ENCODE measurements at regions of chrX and their contacts with region 1.

Region 1: DNA sequence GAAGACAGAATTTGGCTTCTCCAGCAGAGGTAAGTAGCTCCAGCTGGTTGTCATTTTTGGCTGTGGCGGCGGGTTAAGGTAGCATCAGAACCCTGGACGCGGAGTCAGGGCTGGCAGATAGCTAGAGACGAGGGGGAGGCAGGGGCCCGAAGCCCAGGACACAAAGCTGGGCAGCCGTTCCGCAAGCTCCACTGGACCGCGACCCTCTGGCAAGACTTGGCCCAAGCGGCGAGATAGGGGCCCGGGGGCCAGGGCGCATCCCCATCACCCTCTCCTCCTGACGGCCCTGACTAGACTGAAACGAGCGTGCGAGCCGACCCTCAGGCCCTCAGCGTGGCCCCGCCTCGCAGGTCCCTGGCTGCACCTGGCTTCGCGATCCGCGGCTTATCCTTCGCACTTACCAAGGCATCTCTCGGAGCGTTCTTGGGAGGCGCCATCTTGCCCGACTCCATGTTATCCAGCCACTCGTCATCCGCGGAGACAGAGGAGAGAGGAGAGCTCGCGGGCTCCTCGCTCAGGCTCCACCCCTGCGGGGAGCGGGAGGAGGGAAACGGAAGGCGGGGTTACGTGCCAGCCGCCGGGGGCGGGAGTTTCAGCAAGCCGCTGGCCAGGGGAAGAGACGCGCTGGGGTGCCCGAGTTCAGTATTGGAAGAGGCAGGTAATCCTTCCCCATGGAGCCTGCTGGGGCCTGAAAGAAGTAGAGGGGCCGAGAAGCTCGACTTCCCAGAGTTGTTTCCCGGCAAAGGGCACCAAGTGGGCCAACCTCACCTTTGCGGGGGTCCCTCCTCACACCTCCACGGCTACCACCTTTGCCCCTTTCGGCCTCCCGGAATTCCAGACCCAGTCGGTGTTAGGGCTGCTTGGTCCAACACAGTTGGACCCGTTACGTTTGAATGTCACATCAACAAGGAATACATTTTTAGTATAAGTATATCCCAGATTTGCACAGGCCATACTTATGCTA is at the start of gene TAF9B:
- DNase-seq: peak; percentile 71
- ATAC-seq: peak; percentile 100
- H3K4me3 ChIP-seq: peak within 1 kb of the TSS; percentile 69
- H3K27ac ChIP-seq: peak within 1 kb of the TSS; percentile 84
- H3K4me1 ChIP-seq: no peaks in the 10 kb centered on the region
- H3K27me3 ChIP-seq: no peaks in the 10 kb centered on the region
- CTCF ChIP-seq: no peak
- POLR2A ChIP-seq: no peak; the same call in 1 of the 2 replicates
- RAD21 ChIP-seq: no peak
- total RNA-seq, gene TAF9B: 21.5 and 35.3 TPM in 2 replicates

Region 2: DNA sequence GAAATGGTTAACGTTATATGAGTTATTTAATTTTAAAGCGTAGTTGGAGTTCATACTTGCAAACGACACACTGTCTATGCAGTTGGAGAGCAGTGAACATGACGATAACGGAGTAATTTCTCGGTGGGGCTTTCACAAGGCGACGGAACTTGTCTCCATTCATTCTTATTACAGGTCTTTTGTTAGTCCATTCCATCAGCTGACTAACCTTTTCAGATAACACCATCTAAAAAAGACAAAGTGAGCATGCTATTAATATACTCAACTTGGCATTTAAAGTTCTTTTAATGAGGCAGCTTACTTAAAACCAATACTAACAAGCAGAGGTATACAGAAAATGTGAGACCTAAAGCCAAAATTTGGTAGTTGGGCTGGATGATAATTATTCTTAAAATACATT is 264.1 kb before region 1 on chrX:
- CTCF ChIA-PET with region 1: no interaction called
- POLR2A ChIA-PET with region 1: interaction called, 14 read pairs
- dilution Hi-C with region 1: no loop called
- in situ Hi-C with region 1: no loop called
- intact Hi-C with region 1: no loop called
- DNase-seq: no peak
- ATAC-seq: no peak
- H3K4me3 ChIP-seq: no peak overlapping the region
- H3K27ac ChIP-seq: no peak overlapping the region
- H3K4me1 ChIP-seq: no peaks in the 10 kb centered on the region
- H3K27me3 ChIP-seq: no peaks in the 10 kb centered on the region
- CTCF ChIP-seq: no peak
- POLR2A ChIP-seq: no peak
- RAD21 ChIP-seq: no peak

Measured in IMR-90 (cell line).